ENCODE measurements at regions of chr16 and their contacts with region 1.

Region 1: GRCh38 chr16:85027349-85027957 is at the start of gene KIAA0513:
- DNase-seq: peak; percentile 86 to 92
- ATAC-seq: peak; percentile 91 to 92
- H3K4me3 ChIP-seq: peak within 1 kb of the TSS; percentile 85
- H3K27ac ChIP-seq: peak within 1 kb of the TSS; percentile 75 to 92
- H3K4me1 ChIP-seq: peaks cover 31% of the 10 kb centered on the region
- CTCF ChIP-seq: no peak; the same call in 2 of the 3 replicates
- EP300 ChIP-seq: no peak
- POLR2A ChIP-seq: peak; percentile 80
- RAD21 ChIP-seq: no peak
- polyA plus RNA-seq, gene KIAA0513: 1.5 and 1.8 TPM in 2 replicates

Region 2: GRCh38 chr16:84703681-84704080 is 323.8 kb before region 1 on chr16:
- CTCF ChIA-PET with region 1: no interaction called
- POLR2A ChIA-PET with region 1: no interaction called
- DNase-seq: no peak
- ATAC-seq: no peak
- H3K4me3 ChIP-seq: no peak overlapping the region
- H3K27ac ChIP-seq: no peak overlapping the region
- H3K4me1 ChIP-seq: peaks cover 46% of the 10 kb centered on the region
- CTCF ChIP-seq: no peak
- EP300 ChIP-seq: no peak
- POLR2A ChIP-seq: no peak
- RAD21 ChIP-seq: no peak

Region 3: GRCh38 chr16:85010931-85011845 is 16.3 kb before region 1 on chr16 and contains the start of gene ZDHHC7:
- CTCF ChIA-PET with region 1: interaction called, 11 read pairs
- POLR2A ChIA-PET with region 1: interaction called, 16 read pairs
- DNase-seq: peak; percentile 85 to 88
- ATAC-seq: peak; percentile 96 to 98
- H3K4me3 ChIP-seq: peak within 1 kb of the TSS; percentile 87
- H3K27ac ChIP-seq: peak within 1 kb of the TSS; percentile 99
- H3K4me1 ChIP-seq: peaks cover 32% of the 10 kb centered on the region
- CTCF ChIP-seq: no peak
- EP300 ChIP-seq: 0 out of 5 replicates have a peak, but pooled peaks of 1 of the 2 experiments have one; percentile 20
- POLR2A ChIP-seq: peak; percentile 89
- RAD21 ChIP-seq: peak in 1 of 2 experiments; percentile 22; a peak in 2 of 5 replicates
- polyA plus RNA-seq, gene ZDHHC7: 58.0 and 88.6 TPM in 2 replicates

Region 4: GRCh38 chr16:85017151-85017550 is 10.3 kb before region 1 on chr16:
- CTCF ChIA-PET with region 1: interaction called, 11 read pairs
- POLR2A ChIA-PET with region 1: interaction called, 16 read pairs
- DNase-seq: no peak
- ATAC-seq: no peak
- H3K4me3 ChIP-seq: no peak overlapping the region
- H3K27ac ChIP-seq: no peak overlapping the region
- H3K4me1 ChIP-seq: peaks cover 5% of the 10 kb centered on the region; the same call in 1 of the 3 replicates
- CTCF ChIP-seq: no peak
- EP300 ChIP-seq: no peak
- POLR2A ChIP-seq: no peak
- RAD21 ChIP-seq: no peak

Region 5: GRCh38 chr16:85168732-85169256 is 141.3 kb after region 1 on chr16:
- CTCF ChIA-PET with region 1: no interaction called
- POLR2A ChIA-PET with region 1: no interaction called
- DNase-seq: peak in 1 of 2 experiments; percentile 60
- ATAC-seq: 0 out of 6 replicates have a peak, but pooled peaks have one; percentile 5 to 7
- H3K4me3 ChIP-seq: peak overlapping the region; percentile 73
- H3K27ac ChIP-seq: peak overlapping the region; percentile 34 to 92; a peak in 5 of 6 replicates
- H3K4me1 ChIP-seq: peaks cover 44% of the 10 kb centered on the region
- CTCF ChIP-seq: no peak
- EP300 ChIP-seq: no peak
- POLR2A ChIP-seq: no peak
- RAD21 ChIP-seq: no peak